GM23248 (cell line): ENCODE measurements at regions of chr12 and their contacts with region 1.

Region 1: GRCh38 chr12:82627569-82628198 is 59.0 kb upstream of the TMTC2 start:
- DNase-seq: peak; percentile 74
- H3K4me3 ChIP-seq: no peak overlapping the region
- H3K27ac ChIP-seq: no peak overlapping the region
- H3K4me1 ChIP-seq: no peaks in the 10 kb centered on the region
- H3K27me3 ChIP-seq: no peaks in the 10 kb centered on the region

Region 2: GRCh38 chr12:82383930-82384552 is 243.6 kb before region 1 on chr12:
- in situ Hi-C with region 1: loop called (anchors 10 kb)
- DNase-seq: peak; percentile 45
- H3K4me3 ChIP-seq: no peak overlapping the region
- H3K27ac ChIP-seq: no peak overlapping the region
- H3K4me1 ChIP-seq: no peaks in the 10 kb centered on the region
- H3K27me3 ChIP-seq: no peaks in the 10 kb centered on the region

Region 3: DNA sequence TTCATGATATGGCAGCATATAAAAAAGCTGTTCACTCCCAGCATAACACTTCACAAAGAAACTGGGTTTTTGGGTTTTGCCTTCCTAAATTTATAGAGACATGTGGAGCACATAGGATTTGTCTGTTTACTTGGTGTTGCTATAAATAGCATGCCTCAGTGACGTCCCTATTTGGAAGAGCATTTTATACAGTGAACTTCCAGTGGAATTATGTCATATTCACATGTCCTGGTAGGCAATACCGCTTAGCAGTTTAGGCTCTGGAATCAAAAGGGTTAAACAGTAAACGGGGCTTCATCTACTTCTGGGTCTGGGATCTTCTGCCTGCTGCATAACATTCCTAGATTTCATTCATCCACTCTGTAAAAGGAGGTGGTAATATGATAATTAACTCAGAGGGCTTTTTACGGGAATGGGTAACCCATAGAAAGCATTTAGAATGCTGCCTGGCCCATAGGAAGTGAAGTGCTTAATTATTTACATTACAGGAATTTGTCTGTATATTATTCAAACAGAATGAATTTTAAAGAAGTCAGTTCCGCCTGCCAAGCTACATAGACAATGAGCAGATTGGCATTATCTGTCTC is 455.1 kb after region 1 on chr12:
- in situ Hi-C with region 1: no loop called
- DNase-seq: no peak
- H3K4me3 ChIP-seq: no peak overlapping the region
- H3K27ac ChIP-seq: no peak overlapping the region
- H3K4me1 ChIP-seq: no peaks in the 10 kb centered on the region
- H3K27me3 ChIP-seq: no peaks in the 10 kb centered on the region